ENCODE measurements at regions of chr3 and their contacts with region 1.

Region 1: GRCh38 chr3:69306239-69307185 is 79.4 kb downstream of the FRMD4B start:
- DNase-seq: peak; percentile 75
- ATAC-seq: peak; percentile 94
- H3K4me3 Mint-ChIP-seq: no peak overlapping the region
- H3K27ac Mint-ChIP-seq: peak overlapping the region; percentile 16
- H3K4me1 Mint-ChIP-seq: peaks cover 20% of the 10 kb centered on the region
- H3K27me3 Mint-ChIP-seq: no peaks in the 10 kb centered on the region
- CTCF ChIP-seq: peak; percentile 82

Region 2: DNA sequence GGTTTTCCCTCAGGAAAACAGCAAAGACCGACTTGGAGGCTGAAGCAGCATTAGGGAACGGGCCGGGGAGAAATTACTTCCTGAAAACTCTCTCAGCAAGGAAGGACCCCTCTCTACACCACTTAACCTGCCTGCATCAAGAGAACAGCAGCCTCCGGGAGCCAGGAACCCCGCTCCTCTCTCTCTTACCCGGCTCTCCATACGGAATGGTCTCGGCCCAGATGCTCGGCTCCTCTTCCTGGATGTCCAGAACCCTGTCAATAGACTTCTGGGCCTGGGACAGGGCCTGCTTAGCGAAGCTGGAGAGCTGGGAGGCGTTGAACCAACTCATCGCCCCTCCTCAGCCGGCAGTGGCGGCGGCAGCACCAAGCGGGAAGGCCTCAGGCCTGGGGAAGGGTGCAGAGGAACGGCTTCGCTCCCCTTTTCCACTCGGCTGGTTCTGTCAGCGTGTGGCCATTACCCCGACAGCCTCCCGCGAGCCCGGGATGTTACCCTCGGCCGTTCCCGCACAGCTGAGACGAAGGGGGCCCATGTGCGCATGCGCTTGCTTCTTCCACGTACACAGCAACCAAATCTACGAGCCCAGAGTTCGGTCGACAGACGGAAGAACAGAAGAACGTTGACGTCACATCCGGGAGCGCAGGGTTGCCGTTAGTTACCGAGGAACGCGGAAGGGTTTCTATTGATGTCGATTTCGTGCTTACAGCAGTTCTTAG is 254.6 kb before region 1 on chr3 and contains the start of gene TMF1:
- CTCF ChIA-PET with region 1: no interaction called
- POLR2A ChIA-PET with region 1: no interaction called
- intact Hi-C with region 1: no loop called
- DNase-seq: peak; percentile 99
- ATAC-seq: peak; percentile 95
- H3K4me3 Mint-ChIP-seq: peak within 1 kb of the TSS; percentile 87
- H3K27ac Mint-ChIP-seq: peak within 1 kb of the TSS; percentile 90
- H3K4me1 Mint-ChIP-seq: peaks cover 41% of the 10 kb centered on the region
- H3K27me3 Mint-ChIP-seq: no peaks in the 10 kb centered on the region
- CTCF ChIP-seq: no peak
- total RNA-seq, gene TMF1: 38.9 to 42.1 TPM

Region 3: DNA sequence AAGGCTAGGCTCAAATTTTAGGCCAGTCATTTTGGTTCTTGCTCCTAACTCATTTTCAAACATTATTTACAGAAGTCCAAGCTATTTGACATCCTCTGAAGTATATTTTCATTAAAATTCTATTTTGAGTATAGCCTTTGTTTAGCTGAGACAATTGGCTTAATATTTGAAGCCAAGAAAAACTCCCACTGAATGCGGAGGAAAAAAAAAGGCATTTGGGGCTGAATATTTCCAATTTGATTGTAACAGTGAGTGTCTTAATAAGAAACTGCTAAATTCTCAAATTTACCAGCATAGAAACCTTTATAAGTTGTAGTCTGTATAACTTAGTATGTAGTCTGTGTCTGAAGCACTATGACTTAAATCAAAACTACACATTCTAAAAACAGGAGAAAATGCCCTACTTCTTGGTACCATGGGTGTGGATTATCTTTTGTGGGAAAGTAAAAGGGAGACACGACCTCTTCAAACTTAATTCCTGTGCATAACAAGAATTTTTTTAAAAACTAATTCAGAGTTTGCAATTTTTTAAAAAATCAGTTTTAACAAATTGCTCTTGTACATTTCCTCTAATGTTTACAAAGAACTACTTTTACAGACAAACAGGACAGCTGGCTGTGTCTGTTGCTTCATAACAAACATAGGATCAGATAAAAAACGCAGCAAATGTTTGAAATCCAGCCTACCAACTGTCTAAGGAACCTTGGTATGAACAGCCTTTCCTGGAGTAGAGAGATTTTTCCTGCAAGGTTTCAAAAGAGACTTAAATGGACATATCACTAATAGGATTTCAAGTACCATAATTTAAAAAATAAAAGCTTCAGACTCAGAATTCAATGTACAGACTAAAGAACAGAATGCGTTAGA is 131.4 kb before region 1 on chr3:
- CTCF ChIA-PET with region 1: interaction called, 13 read pairs
- POLR2A ChIA-PET with region 1: interaction called, 4 read pairs
- intact Hi-C with region 1: no loop called
- DNase-seq: no peak
- ATAC-seq: no peak
- H3K4me3 Mint-ChIP-seq: no peak overlapping the region
- H3K27ac Mint-ChIP-seq: no peak overlapping the region
- H3K4me1 Mint-ChIP-seq: peaks cover 11% of the 10 kb centered on the region
- H3K27me3 Mint-ChIP-seq: no peaks in the 10 kb centered on the region
- CTCF ChIP-seq: no peak

Region 4: GRCh38 chr3:69207031-69207430 is 99.5 kb before region 1 on chr3:
- CTCF ChIA-PET with region 1: interaction called, 12 read pairs
- POLR2A ChIA-PET with region 1: no interaction called
- intact Hi-C with region 1: no loop called
- DNase-seq: no peak
- ATAC-seq: no peak
- H3K4me3 Mint-ChIP-seq: no peak overlapping the region
- H3K27ac Mint-ChIP-seq: no peak overlapping the region
- H3K4me1 Mint-ChIP-seq: peaks cover 67% of the 10 kb centered on the region
- H3K27me3 Mint-ChIP-seq: no peaks in the 10 kb centered on the region
- CTCF ChIP-seq: no peak

Region 5: GRCh38 chr3:69282181-69282580 is 24.3 kb before region 1 on chr3:
- CTCF ChIA-PET with region 1: interaction called, 92 read pairs
- POLR2A ChIA-PET with region 1: no interaction called
- intact Hi-C with region 1: no loop called
- DNase-seq: peak; percentile 92
- ATAC-seq: peak; percentile 100
- H3K4me3 Mint-ChIP-seq: no peak overlapping the region
- H3K27ac Mint-ChIP-seq: peak overlapping the region; percentile 75
- H3K4me1 Mint-ChIP-seq: peaks cover 28% of the 10 kb centered on the region
- H3K27me3 Mint-ChIP-seq: no peaks in the 10 kb centered on the region
- CTCF ChIP-seq: no peak

Region 6: DNA sequence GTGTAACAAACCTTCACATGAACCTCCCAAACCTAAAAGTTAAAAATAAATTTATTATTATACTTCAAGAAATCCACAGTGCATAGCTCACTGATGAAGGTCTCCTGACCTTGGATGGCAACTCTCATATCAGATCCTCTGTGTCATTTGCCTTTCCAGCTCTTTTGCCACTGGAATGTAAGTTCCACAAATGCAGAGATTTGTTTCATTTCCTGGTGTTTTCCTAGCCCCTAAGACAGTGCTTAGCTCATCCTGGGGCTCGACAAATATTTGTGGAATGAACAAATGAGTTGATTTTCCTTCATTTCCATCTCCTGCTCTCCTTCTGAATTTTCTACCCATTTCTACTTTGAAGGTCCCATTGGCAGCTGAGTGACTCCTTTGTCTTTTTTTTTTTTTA is 23.4 kb after region 1 on chr3:
- CTCF ChIA-PET with region 1: interaction called, 13 read pairs
- POLR2A ChIA-PET with region 1: interaction called, 5 read pairs
- intact Hi-C with region 1: no loop called
- DNase-seq: no peak
- ATAC-seq: no peak
- H3K4me3 Mint-ChIP-seq: no peak overlapping the region
- H3K27ac Mint-ChIP-seq: no peak overlapping the region
- H3K4me1 Mint-ChIP-seq: peaks cover 40% of the 10 kb centered on the region
- H3K27me3 Mint-ChIP-seq: no peaks in the 10 kb centered on the region
- CTCF ChIP-seq: no peak

Region 7: GRCh38 chr3:69499899-69500421 is 193.4 kb after region 1 on chr3:
- CTCF ChIA-PET with region 1: no interaction called
- POLR2A ChIA-PET with region 1: no interaction called
- intact Hi-C with region 1: no loop called
- DNase-seq: no peak
- ATAC-seq: no peak
- H3K4me3 Mint-ChIP-seq: no peak overlapping the region
- H3K27ac Mint-ChIP-seq: no peak overlapping the region
- H3K4me1 Mint-ChIP-seq: no peaks in the 10 kb centered on the region
- H3K27me3 Mint-ChIP-seq: peaks cover 2% of the 10 kb centered on the region
- CTCF ChIP-seq: no peak